Left ventricle myocardium superior (tissue), 1 donor: ENCODE measurements at regions of chr3 and their contacts with region 1.

Region 1: GRCh38 chr3:72818092-72818773 is 30.0 kb downstream of the SHQ1 start:
- DNase-seq: no peak
- ATAC-seq: no peak

Region 2: GRCh38 chr3:71875461-71875947 is 942.7 kb before region 1 on chr3:
- intact Hi-C with region 1: loop called (anchors 5 kb)
- DNase-seq: peak; percentile 83
- ATAC-seq: peak; percentile 96

Region 3: DNA sequence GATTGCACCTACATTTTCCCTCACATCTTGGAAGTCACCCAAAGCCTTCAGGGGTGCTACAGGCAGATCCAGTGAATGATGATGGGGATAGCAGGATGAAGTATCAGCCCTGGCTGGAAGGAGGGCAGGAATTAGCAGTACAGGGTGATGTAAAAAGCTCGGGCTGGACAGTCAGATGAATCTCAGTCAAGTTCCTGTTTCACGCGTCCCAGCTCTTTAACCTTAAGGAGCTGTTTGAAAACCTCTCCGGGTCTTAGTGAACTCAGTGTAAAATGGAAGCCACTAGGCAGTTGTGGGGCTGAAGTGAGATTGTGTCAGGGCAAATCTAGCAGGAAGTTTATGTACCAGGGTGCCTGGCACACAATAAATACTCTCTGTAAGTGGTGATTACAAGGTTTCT is 866.9 kb before region 1 on chr3:
- intact Hi-C with region 1: loop called (anchors 5 kb)
- DNase-seq: no peak
- ATAC-seq: no peak

Region 4: DNA sequence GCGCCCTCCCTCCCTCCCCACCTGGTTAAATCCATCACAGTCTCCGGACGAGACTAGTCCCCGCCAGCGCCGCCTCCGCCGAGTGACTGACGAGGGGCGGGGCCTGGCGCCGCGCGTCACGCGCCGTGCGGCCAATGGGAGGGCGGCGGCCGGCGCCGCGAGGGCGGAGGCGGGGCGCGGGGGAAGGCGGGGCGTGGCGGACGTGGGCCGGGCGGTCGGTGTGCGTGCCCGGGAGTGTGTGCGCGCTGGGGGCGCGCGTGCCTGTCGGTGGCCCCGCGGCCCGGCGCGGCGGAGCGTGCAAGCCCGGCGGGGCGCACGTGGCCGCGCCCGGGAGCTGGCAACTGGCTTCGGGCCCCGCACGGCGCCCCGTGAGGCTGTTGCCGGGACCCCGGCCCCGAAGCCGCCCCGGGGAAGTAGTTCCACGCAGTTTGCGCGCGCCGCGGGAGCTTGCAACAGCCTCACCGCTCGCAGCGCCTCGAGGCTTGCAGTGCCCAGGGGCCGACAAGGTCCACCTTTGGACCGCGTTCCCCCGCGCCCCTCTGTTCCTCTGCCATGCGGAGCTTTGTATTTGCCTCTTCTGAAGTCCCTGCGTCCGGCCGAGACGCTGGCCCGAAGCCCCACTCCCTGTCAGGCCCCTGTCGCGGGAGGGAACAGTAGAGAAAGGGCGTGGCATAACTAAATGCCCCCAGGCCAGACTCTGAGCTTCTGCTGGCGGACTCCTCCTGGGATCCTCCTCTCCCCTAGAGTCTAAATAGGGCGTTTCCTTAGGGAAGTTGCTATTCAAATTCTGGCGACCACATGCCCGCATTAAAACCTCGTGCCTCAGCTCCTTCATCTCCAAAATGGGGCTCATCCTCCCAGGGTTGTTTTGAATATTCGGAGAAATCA is 370.9 kb before region 1 on chr3:
- intact Hi-C with region 1: loop called (anchors 10 kb)
- DNase-seq: peak; percentile 98
- ATAC-seq: peak; percentile 98

Region 5: GRCh38 chr3:72665701-72666443 is 152.4 kb before region 1 on chr3:
- intact Hi-C with region 1: loop called (anchors 10 kb)
- DNase-seq: no peak
- ATAC-seq: peak; percentile 35